Aorta (tissue), 5 donors: ENCODE measurements at regions of chr20 and their contacts with region 1.

Region 1: GRCh38 chr20:33415948-33416347 is 14.6 kb upstream of the CDK5RAP1 start:
- DNase-seq: peak; percentile 57 to 81
- ATAC-seq: peak; percentile 31
- H3K4me3 ChIP-seq: no peak overlapping the region
- H3K27ac ChIP-seq: no peak overlapping the region
- H3K4me1 ChIP-seq: peaks cover 0 to 2% of the 10 kb centered on the region in 2 donors
- H3K27me3 ChIP-seq: no peaks in the 10 kb centered on the region

Region 2: GRCh38 chr20:33450867-33451266 is 34.9 kb after region 1 on chr20:
- intact Hi-C with region 1: loop called in 1 of 2 experiments (anchors 5 kb)
- DNase-seq: peak in 1 of 2 donors; percentile 56
- ATAC-seq: no peak
- H3K4me3 ChIP-seq: no peak overlapping the region
- H3K27ac ChIP-seq: no peak overlapping the region
- H3K4me1 ChIP-seq: no peaks in the 10 kb centered on the region
- H3K27me3 ChIP-seq: no peaks in the 10 kb centered on the region

Region 3: DNA sequence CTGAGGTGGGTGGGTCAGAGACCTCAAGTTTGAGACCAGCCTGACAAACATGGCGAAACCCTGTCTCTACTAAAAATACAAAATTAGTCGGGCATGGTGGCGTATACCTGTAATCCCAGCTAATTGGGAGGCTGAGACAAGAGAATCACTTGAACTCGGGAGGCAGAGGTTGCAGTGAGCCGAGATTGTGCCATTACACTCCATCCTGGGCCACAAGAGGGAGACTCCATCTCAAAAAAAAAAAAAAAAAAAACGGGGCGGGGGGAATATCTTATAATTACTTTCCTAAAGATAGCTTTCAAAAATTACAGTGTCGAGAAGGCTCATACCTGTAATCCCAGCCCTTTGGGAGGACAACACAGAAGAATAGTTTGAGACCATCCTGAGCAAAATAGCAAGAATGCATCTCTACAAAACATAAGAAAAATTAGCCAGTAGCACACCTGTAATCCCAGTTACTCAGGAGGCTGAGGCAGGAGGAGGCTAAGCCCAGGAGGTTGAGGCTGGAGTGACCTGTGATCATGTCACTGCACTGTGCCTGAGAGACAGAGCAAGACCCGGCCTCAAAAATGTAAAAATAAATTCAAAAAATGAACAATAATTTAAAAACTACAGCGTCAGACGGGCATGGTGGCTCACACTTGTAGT is 99.7 kb after region 1 on chr20:
- intact Hi-C with region 1: no loop called
- DNase-seq: no peak
- ATAC-seq: no peak
- H3K4me3 ChIP-seq: no peak overlapping the region
- H3K27ac ChIP-seq: no peak overlapping the region
- H3K4me1 ChIP-seq: no peaks in the 10 kb centered on the region
- H3K27me3 ChIP-seq: no peaks in the 10 kb centered on the region

Region 4: DNA sequence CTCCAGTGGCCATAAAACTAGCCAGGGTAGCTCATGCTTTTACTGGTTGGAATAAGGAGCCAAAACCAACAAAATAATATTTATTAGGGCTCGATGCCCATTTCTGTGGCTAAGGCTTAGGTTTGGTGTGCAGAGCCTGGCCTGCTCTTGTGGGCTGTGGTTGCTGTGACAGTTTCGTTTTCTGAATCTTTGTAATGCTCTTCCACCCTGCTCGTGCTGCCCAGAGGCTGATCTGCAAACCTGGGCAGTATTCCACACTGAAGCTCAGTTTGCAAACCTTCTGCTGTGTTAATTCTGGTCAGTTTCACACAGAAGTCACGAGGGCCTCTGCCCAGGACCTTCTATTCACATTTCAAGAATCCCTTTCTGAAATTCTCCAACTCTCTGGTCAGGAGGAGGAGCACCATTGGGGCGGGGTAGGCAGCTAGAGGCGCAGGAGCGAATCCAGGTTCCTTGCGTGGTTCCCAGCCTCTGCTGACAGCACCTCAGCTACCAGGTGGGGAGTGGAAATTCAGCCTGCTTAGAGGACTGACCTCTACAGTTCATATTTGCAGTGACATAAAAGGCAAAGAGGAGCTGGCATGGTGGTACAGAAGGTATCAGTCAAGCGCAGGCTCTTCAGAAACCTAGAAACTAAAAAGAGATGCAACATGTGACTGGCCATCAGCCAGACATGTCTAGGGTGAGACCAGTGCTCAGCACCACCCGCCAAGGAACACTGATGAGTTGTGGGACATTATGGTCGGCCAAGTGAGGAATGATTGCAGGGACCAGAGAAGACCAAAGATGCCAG is 231.9 kb after region 1 on chr20:
- intact Hi-C with region 1: loop called in 1 of 2 experiments (anchors 10 kb)
- DNase-seq: peak in 1 of 2 donors; percentile 62
- ATAC-seq: peak; percentile 82
- H3K4me3 ChIP-seq: no peak overlapping the region
- H3K27ac ChIP-seq: peak overlapping the region in 1 of 2 donors; percentile 28
- H3K4me1 ChIP-seq: peaks cover 0 to 4% of the 10 kb centered on the region in 2 donors
- H3K27me3 ChIP-seq: no peaks in the 10 kb centered on the region

Region 5: GRCh38 chr20:33666293-33667244 is 250.6 kb after region 1 on chr20 and contains the start of gene ACTL10:
- intact Hi-C with region 1: loop called in 1 of 2 experiments (anchors 5 kb)
- DNase-seq: peak; percentile 99
- ATAC-seq: peak; percentile 87
- H3K4me3 ChIP-seq: peak within 1 kb of the TSS; percentile 12 to 28
- H3K27ac ChIP-seq: peak within 1 kb of the TSS in 1 of 2 donors; percentile 85
- H3K4me1 ChIP-seq: no peaks in the 10 kb centered on the region
- H3K27me3 ChIP-seq: no peaks in the 10 kb centered on the region
- total RNA-seq, gene ACTL10: 0.96 to 1.2 TPM

Region 6: DNA sequence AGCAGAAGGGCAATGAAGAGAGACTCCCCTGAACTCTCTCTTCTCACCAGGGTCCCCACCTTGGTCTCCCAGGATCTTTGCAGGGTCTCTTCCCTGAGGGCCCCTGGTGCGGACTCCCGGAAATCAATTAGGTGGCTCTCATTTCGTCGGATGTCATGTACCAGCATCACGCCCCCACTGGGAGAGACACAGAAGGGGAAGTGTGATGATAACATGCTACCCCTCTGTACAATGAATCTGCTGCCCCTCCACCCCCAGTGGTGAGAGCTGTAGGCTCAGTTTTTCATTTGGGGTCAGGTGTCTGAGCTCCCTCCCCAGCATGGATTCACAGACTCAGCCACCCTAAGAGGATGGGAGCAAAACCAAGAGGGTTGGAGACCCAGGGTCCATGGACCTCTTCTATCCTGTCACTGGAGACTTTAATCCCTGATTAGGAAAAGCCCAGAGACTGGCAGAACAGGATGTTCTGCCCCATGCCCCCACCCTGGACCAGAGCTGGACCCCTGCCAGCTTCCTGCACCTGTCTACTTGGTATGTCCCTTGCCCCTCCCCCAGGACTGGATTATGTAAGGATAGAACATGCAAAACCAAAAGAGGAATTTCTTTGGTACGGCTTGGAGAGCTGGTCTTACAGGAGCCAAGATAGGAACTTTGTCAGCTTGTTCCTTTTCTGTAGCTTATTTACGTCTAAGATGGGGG is 1445.6 kb after region 1 on chr20:
- intact Hi-C with region 1: no loop called
- DNase-seq: no peak
- ATAC-seq: no peak
- H3K4me3 ChIP-seq: no peak overlapping the region
- H3K27ac ChIP-seq: no peak overlapping the region
- H3K4me1 ChIP-seq: no peaks in the 10 kb centered on the region
- H3K27me3 ChIP-seq: no peaks in the 10 kb centered on the region